Endothelial cell of umbilical vein (primary cell): ENCODE measurements at regions of chr10 and their contacts with region 1.

Region 1: DNA sequence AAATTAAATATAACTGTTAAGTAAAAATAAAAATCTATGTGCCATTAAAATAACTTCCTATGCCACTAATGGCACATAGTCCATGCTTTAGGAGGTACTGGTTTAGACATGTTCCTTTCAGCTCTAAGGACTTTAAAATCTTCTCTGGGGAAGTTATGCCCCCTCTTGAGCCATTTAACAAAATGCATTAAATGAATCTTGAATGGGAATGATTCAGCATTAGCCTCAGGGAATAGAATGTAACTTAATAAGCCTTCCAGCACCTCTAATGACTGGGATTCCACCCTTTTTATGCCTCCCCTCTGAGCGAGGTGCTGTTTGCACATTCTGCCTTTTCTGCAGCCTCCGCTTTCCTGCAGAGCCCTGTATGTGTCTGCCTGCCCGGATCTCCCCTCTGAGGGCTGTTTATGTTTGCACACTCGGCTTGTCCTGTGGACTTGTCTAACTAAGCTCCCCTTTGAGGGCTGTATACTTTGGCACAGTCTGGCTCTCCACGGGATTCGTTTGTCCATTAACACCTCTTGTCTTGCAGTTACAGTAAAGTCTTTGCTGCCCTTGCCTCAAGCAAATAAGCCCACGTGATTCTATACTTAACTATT is 108.4 kb upstream of the HPS1 start:
- DNase-seq: peak; percentile 41
- H3K4me3 ChIP-seq: no peak overlapping the region
- H3K27ac ChIP-seq: no peak overlapping the region
- H3K4me1 ChIP-seq: peaks cover 9% of the 10 kb centered on the region
- H3K27me3 ChIP-seq: no peaks in the 10 kb centered on the region
- CTCF ChIP-seq: no peak
- POLR2A ChIP-seq: no peak

Region 2: DNA sequence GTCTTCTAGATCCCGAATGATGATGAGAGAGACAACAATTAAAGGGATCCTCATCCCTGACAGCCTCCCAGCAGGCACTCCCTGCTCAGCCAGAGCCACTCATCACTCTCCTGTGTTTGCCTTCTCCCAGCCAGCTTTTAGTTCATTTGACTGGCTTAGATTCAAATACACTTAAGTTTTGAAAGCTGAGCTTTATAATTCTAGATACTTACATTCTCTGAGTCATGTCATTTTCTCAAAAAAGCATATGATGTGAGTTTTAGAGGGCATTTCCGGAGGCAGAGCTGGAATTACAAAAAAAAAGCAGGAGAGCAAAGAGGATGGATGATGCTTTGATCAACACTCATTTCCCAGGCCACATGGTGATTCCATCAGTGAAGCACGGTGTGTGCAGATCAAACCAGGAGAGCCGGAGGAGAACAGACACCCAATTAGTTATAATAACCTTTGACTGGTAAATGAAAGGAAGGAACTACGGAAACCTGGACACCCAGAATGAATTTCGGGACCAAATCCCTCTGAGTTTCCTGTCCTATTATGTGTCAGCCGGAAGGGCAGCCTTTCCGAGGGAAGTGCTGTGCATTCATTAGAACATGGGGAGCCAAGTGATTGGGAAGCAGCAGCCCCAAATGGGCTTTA is 26.8 kb before region 1 on chr10:
- CTCF ChIA-PET with region 1: interaction called, 3 read pairs
- POLR2A ChIA-PET with region 1: no interaction called
- dilution Hi-C with region 1: no loop called
- intact Hi-C with region 1: loop called (anchors 1 kb)
- DNase-seq: peak; percentile 63
- H3K4me3 ChIP-seq: no peak overlapping the region
- H3K27ac ChIP-seq: peak overlapping the region; percentile 44
- H3K4me1 ChIP-seq: peaks cover 10% of the 10 kb centered on the region
- H3K27me3 ChIP-seq: no peaks in the 10 kb centered on the region
- CTCF ChIP-seq: no peak
- POLR2A ChIP-seq: no peak

Region 3: GRCh38 chr10:98599032-98599610 is 44.0 kb after region 1 on chr10:
- CTCF ChIA-PET with region 1: no interaction called
- POLR2A ChIA-PET with region 1: no interaction called
- dilution Hi-C with region 1: no loop called
- intact Hi-C with region 1: no loop called
- DNase-seq: no peak
- H3K4me3 ChIP-seq: no peak overlapping the region
- H3K27ac ChIP-seq: no peak overlapping the region
- H3K4me1 ChIP-seq: no peaks in the 10 kb centered on the region
- H3K27me3 ChIP-seq: no peaks in the 10 kb centered on the region
- CTCF ChIP-seq: no peak
- POLR2A ChIP-seq: no peak